ENCODE measurements at regions of chr9 and their contacts with region 1.

Region 1: GRCh38 chr9:91193658-91194391 is 167.9 kb downstream of the AUH start:
- DNase-seq: peak; percentile 70
- H3K4me3 Mint-ChIP-seq: peak overlapping the region; percentile 57
- H3K27ac Mint-ChIP-seq: peak overlapping the region; percentile 81
- H3K4me1 Mint-ChIP-seq: peaks cover 36% of the 10 kb centered on the region
- H3K27me3 Mint-ChIP-seq: no peaks in the 10 kb centered on the region
- CTCF ChIP-seq: no peak

Region 2: DNA sequence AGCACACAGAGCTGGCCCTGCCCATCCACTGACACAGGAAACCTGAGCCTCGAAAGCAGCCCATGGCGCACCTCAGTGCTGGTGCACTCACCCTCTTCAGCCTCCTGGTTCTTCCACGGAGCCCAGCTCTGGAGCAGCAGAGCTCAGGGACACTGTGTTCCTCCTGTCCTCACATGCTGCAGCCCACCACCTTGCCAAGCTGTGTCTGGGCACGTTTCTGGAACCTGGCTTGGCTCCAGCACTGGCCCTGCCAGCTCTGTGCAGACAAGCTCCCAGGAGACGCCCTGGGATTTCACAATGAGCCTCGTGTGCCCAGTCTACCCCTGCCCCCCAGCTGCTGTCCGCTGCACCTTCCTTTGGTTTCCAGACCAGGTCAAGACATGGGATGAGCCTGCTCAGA is 272.7 kb before region 1 on chr9:
- CTCF ChIA-PET with region 1: interaction called, 14 read pairs
- POLR2A ChIA-PET with region 1: interaction called, 25 read pairs
- intact Hi-C with region 1: loop called (anchors 10 kb)
- DNase-seq: peak; percentile 98
- H3K4me3 Mint-ChIP-seq: peak overlapping the region; percentile 26
- H3K27ac Mint-ChIP-seq: peak overlapping the region; percentile 83
- H3K4me1 Mint-ChIP-seq: peaks cover 55% of the 10 kb centered on the region
- H3K27me3 Mint-ChIP-seq: no peaks in the 10 kb centered on the region
- CTCF ChIP-seq: no peak

Region 3: DNA sequence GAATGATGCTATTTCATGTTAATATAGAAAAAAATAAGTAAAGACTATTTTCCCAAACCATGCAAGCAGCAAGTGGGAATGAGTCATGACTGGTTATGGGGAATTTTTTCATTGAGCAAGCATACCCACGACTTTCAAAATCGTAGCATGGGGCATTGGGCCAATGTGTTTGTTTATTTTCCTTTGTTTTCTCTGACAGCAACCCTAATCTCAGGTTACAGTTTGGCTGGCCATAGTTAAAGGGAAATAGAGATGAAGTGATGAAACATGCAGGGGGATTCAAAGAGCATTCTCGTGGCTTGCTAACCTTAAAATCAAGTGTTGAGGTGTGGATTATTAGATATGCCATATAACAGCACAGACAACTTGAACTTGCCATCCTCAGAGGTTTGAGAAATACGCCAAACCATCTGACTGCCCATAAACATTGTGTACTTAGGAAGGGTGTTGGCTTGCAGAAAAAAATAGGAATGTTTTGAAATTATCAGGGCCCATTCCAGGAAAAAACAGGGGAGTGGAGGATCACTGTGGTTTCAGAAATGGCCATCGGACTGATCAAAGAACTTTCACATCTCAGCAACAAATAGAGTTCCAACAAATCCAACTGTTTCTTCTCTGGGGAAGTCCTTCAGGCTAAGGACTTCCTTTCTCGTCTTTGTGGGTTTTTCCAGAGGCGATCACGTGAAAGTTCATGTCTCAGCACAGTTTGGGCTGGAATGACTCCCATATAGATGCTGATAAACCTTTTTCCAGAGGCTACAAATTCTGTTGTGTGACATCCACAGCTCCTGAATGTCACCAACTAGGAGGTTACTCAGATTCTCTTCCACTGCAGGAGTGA is 133.1 kb before region 1 on chr9:
- CTCF ChIA-PET with region 1: interaction called, 4 read pairs
- POLR2A ChIA-PET with region 1: interaction called, 13 read pairs
- intact Hi-C with region 1: loop called (anchors 1 kb)
- DNase-seq: peak; percentile 99
- H3K4me3 Mint-ChIP-seq: peak overlapping the region; percentile 63
- H3K27ac Mint-ChIP-seq: peak overlapping the region; percentile 98
- H3K4me1 Mint-ChIP-seq: peaks cover 45% of the 10 kb centered on the region
- H3K27me3 Mint-ChIP-seq: no peaks in the 10 kb centered on the region
- CTCF ChIP-seq: no peak

Region 4: GRCh38 chr9:91117959-91118703 is 75.7 kb before region 1 on chr9:
- CTCF ChIA-PET with region 1: no interaction called
- POLR2A ChIA-PET with region 1: interaction called, 10 read pairs
- intact Hi-C with region 1: no loop called
- DNase-seq: no peak
- H3K4me3 Mint-ChIP-seq: no peak overlapping the region
- H3K27ac Mint-ChIP-seq: peak overlapping the region; percentile 83
- H3K4me1 Mint-ChIP-seq: peaks cover 34% of the 10 kb centered on the region
- H3K27me3 Mint-ChIP-seq: no peaks in the 10 kb centered on the region
- CTCF ChIP-seq: no peak

Region 5: DNA sequence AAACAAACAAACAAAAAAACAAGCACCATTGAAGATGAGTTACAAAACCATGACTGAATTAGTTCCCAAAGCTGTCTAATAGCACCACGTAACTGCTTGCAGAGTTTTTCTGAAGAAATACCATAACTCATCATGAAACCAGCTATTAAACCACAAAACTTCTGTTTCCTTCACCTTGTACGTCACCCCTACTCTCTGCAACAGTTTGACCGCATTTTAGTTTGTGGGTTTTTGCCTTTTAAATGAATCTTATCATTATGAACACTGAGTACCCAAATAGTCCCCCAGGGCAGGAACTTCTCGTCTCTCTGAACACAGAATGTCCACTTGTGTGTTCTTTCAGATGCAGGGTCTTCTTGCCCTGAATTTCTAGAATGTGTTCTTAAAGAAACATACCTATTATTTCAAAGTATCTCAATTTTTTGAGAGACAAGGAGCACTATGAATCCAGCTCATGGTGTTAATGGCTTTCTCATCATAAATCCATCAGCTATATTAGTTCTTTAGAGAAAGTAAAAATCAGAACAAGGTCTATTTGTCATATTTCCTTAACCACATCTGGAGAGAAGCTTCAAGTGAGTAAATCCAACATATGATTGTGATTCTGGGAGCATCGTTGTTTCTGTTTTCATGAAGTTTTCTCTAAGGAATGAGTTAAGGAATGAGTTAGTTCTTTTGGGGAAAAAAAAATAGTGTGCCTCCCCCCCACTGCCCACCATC is 42.7 kb before region 1 on chr9:
- CTCF ChIA-PET with region 1: interaction called, 4 read pairs
- POLR2A ChIA-PET with region 1: interaction called, 13 read pairs
- intact Hi-C with region 1: loop called (anchors 2 kb)
- DNase-seq: peak; percentile 86
- H3K4me3 Mint-ChIP-seq: peak overlapping the region; percentile 21
- H3K27ac Mint-ChIP-seq: peak overlapping the region; percentile 96
- H3K4me1 Mint-ChIP-seq: peaks cover 43% of the 10 kb centered on the region
- H3K27me3 Mint-ChIP-seq: no peaks in the 10 kb centered on the region
- CTCF ChIP-seq: no peak

Region 6: DNA sequence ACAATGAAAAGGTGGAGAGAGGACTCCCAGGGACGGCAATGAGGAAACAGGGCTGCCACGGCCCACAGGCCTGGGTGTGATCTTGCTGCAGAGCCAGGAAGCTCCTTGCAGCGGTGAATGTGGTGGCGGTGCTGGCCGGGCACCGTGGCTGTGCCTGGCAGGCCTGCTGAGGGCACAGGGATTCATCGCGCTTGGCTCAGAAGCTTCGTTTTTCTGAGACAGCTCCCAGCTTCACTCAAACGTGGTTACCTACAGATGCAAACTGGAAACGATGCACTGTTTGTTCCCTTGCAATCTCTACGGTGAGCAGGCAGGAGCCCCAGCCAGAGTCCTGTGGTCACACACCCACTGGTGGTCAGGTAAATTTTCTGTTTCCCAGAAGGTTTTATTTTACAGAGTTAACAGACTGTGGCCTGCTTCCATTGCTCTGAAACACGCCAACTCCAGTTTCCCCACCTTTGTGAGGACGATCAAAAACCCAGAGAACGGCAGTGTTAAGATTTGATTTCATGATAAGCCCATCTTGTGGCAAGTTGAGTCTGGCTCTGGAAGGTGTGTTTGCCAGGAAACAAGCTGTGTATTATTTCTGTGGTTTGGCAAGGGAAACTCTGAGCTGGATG is 16.1 kb before region 1 on chr9:
- CTCF ChIA-PET with region 1: interaction called, 4 read pairs
- POLR2A ChIA-PET with region 1: interaction called, 110 read pairs
- intact Hi-C with region 1: no loop called
- DNase-seq: peak; percentile 94
- H3K4me3 Mint-ChIP-seq: peak overlapping the region; percentile 57
- H3K27ac Mint-ChIP-seq: peak overlapping the region; percentile 89
- H3K4me1 Mint-ChIP-seq: peaks cover 50% of the 10 kb centered on the region
- H3K27me3 Mint-ChIP-seq: no peaks in the 10 kb centered on the region
- CTCF ChIP-seq: no peak

Region 7: GRCh38 chr9:91361291-91362050 is 167.6 kb after region 1 on chr9 and contains the start of gene AUH:
- CTCF ChIA-PET with region 1: no interaction called
- POLR2A ChIA-PET with region 1: interaction called, 32 read pairs
- intact Hi-C with region 1: loop called (anchors 1 kb)
- DNase-seq: peak; percentile 75
- H3K4me3 Mint-ChIP-seq: peak within 1 kb of the TSS; percentile 93
- H3K27ac Mint-ChIP-seq: peak within 1 kb of the TSS; percentile 98
- H3K4me1 Mint-ChIP-seq: peaks cover 38% of the 10 kb centered on the region
- H3K27me3 Mint-ChIP-seq: no peaks in the 10 kb centered on the region
- CTCF ChIP-seq: no peak
- total RNA-seq, gene AUH: 16.1 and 20.9 TPM in 2 replicates